HCT116 (cell line): ENCODE measurements at regions of chr17 and their contacts with region 1.

Region 1: DNA sequence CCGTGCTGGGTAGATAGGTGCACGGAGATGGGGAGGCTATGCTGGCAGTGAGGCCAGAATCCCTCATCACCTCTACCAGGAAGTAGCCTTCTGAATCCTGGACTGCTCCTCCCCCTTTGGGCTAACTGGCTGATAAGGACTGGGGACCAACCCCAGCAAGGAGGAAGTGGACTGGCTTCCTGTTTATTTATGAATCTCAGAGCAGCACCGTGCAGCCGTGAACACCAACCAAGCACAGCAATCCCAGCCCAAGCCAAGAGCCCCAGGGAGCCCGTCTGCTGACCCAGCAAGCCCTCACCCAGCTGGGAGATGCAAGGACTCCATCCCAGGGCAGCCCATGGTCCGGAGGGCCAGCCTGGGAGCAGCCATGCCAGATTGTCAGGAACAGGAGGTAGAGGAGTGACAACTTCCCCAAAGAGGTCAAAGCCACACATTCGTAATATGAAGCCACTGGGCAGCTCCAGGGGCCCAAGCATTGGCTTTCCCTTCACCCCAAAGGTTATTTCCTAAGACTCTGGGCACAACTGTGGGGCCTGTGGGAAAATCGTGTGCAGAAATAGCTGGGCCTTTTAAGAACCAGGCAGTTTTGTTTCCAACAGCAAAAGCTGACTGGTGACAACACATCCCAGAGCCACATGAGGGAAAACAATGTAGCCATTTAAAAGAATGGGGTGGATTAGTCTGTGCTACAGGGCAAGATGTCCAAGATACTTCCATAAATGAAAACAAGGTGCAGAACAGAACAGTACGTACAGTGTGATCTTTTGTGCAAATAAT is 23.9 kb downstream of the PHB1 start:
- DNase-seq: no peak
- ATAC-seq: no peak
- H3K4me3 ChIP-seq: no peak overlapping the region
- H3K27ac ChIP-seq: no peak overlapping the region; the same call in 1 of the 2 replicates
- H3K4me1 ChIP-seq: peaks cover 15 to 30% of the 10 kb centered on the region in 2 experiments
- H3K27me3 ChIP-seq: no peaks in the 10 kb centered on the region
- CTCF ChIP-seq: no peak
- POLR2A ChIP-seq: no peak
- RAD21 ChIP-seq: no peak

Region 2: DNA sequence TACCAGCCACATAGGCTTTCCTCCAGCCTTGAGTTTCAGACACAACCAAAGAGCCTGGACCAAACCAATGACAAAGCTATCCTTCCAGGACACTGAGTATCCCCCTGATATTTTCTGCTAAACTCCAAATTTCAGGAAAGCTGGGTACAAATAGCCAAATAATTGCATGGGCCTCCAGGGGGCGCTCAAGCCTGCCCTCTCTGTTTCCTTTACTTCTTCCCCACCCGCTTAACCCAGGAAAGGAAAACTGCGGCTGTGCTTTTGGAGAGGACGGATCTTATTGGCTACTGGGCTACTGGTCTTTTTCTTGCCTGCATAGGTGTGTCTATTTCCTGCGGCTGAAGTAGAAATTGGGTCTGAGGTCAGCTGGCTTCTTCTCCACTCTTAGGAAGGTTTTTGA is 210.4 kb before region 1 on chr17:
- CTCF ChIA-PET with region 1: no interaction called
- POLR2A ChIA-PET with region 1: no interaction called
- RAD21 ChIA-PET with region 1: no interaction called
- intact Hi-C with region 1: loop called (anchors 1 kb)
- DNase-seq: peak; percentile 74
- ATAC-seq: peak; percentile 96
- H3K4me3 ChIP-seq: no peak overlapping the region
- H3K27ac ChIP-seq: no peak overlapping the region
- H3K4me1 ChIP-seq: peaks cover 0 to 6% of the 10 kb centered on the region in 2 experiments; a peak in 1 of 4 replicates
- H3K27me3 ChIP-seq: no peaks in the 10 kb centered on the region
- CTCF ChIP-seq: peak; percentile 87 to 99 (median 97)
- POLR2A ChIP-seq: no peak
- RAD21 ChIP-seq: peak; percentile 86

Region 3: GRCh38 chr17:49450735-49451134 is 60.0 kb after region 1 on chr17:
- CTCF ChIA-PET with region 1: no interaction called
- POLR2A ChIA-PET with region 1: no interaction called
- RAD21 ChIA-PET with region 1: no interaction called
- intact Hi-C with region 1: no loop called
- DNase-seq: no peak
- ATAC-seq: no peak
- H3K4me3 ChIP-seq: no peak overlapping the region
- H3K27ac ChIP-seq: no peak overlapping the region
- H3K4me1 ChIP-seq: peaks cover 5 to 20% of the 10 kb centered on the region in 2 experiments; a peak in 3 of 4 replicates
- H3K27me3 ChIP-seq: 0 out of 2 replicates have a peak, but pooled peaks cover 6% of the 10 kb centered on the region
- CTCF ChIP-seq: no peak
- POLR2A ChIP-seq: no peak
- RAD21 ChIP-seq: no peak